Right cardiac atrium (tissue), 5 donors: ENCODE measurements at regions of chr14 and their contacts with region 1.

Region 1: GRCh38 chr14:90399541-90400444 is 3.0 kb downstream of the CALM1 start:
- DNase-seq: peak; percentile 90 to 96 (median 94)
- ATAC-seq: peak; percentile 65 to 76
- H3K4me3 ChIP-seq: peak overlapping the region; percentile 84
- H3K27ac ChIP-seq: peak overlapping the region; percentile 56
- H3K4me1 ChIP-seq: peaks cover 5% of the 10 kb centered on the region
- H3K27me3 ChIP-seq: no peaks in the 10 kb centered on the region

Region 2: GRCh38 chr14:90518941-90519256 is 119.1 kb after region 1 on chr14:
- intact Hi-C with region 1: loop called in 1 of 4 experiments (anchors 10 kb)
- DNase-seq: peak in 1 of 3 donors; percentile 58
- ATAC-seq: no peak
- H3K4me3 ChIP-seq: no peak overlapping the region
- H3K27ac ChIP-seq: no peak overlapping the region
- H3K4me1 ChIP-seq: peaks cover 27% of the 10 kb centered on the region
- H3K27me3 ChIP-seq: no peaks in the 10 kb centered on the region

Region 3: GRCh38 chr14:90697577-90698206 is 297.9 kb after region 1 on chr14:
- intact Hi-C with region 1: loop called (anchors 1 to 10 kb)
- DNase-seq: peak; percentile 84 to 92 (median 92)
- ATAC-seq: peak; percentile 92 to 94
- H3K4me3 ChIP-seq: no peak overlapping the region
- H3K27ac ChIP-seq: peak overlapping the region; percentile 13
- H3K4me1 ChIP-seq: peaks cover 4% of the 10 kb centered on the region
- H3K27me3 ChIP-seq: no peaks in the 10 kb centered on the region

Region 4: DNA sequence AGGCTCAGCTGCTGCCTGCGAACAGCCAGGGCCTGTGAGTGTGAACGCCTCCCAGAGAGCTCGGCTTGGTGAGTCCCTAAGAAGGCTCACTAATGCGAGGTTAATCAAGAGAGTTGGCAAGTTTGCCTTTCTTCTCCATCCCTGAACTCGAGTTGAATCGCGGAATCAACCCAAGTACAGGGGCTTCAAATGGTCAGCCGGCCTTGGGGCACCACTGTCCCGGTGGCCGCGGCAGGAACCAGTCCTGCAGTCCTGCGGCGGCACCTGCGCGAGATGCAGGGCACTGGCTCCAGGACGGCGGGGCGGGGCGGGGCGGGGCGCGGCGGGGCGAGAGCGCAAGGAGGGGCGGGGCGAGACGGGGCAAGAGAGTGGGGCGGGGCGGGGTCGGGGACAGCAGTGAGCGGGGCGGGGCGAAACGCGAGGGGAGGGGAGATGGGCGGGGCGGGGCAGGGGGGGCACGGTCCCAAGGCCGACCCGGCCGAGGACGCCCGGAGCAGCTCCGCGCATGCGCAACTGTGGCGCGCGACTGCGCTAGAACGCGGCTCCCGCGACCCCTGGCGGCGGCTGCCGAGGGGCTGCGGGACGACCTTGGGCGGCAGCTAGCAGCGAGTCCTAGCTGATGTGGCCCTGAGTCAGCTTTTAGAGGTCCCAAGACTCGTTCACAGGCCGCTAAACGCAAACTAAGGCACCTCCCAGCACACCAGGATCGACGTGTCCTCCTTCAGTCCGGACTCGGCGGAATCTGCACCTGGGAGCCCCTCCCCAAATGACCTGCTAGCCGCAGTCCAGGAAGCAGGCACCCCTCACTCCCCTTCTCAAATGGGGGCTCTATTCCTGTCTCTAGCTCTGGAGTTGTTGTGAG is 358.5 kb after region 1 on chr14:
- intact Hi-C with region 1: loop called in 2 of 4 experiments (anchors 5 kb)
- DNase-seq: peak; percentile 93 to 98 (median 97)
- ATAC-seq: peak; percentile 93
- H3K4me3 ChIP-seq: peak overlapping the region; percentile 52
- H3K27ac ChIP-seq: peak overlapping the region; percentile 97
- H3K4me1 ChIP-seq: peaks cover 4% of the 10 kb centered on the region
- H3K27me3 ChIP-seq: no peaks in the 10 kb centered on the region